SK-N-SH (cell line): ENCODE measurements at regions of chr15 and their contacts with region 1.

Region 1: DNA sequence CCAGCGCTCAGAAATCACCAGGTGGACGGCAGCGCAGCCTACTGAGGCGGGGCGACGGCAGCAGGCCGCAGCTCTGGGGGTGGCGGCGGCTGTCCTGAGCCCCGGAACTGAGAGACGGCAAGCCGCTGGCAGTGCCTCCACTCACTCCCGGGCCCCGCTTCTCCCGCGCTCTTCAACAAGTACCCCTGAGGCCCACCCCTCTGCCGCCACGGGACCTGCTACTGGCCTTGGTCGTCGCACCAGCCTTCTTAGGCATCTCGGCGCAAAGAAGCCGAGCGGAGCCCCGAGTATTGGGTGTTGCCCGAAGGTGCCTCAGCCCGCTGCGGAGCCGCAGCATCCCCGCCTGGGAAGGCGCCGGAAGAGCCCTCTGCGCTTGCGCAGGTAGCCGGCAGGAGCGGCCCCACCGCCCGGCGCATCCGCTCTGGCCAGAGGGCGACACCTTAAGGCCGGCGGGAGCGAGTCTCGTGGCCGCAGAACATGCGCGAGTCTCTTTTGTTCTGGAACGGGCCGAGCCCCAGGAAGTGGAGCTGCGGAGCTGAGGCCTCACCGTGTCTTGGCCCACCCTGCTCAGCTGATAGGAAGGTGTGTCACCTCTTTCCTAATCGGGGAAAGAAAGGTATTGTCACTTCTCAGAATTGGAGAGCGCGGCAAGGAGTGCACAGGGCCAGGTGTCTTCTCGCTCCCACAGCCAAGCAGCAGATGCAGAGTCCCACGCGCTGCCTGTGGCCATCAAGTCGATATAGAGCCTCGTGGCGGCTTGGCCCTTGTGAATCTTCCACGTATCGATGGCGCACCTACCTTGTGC is at the start of gene C15orf40:
- DNase-seq: peak; percentile 96
- H3K4me3 ChIP-seq: peak within 1 kb of the TSS; percentile 94 to 99
- H3K27ac ChIP-seq: peak within 1 kb of the TSS; percentile 75 to 85
- H3K4me1 ChIP-seq: peaks cover 12 to 27% of the 10 kb centered on the region in 2 experiments; a peak in 3 of 4 replicates
- H3K27me3 ChIP-seq: no peaks in the 10 kb centered on the region
- CTCF ChIP-seq: peak; percentile 69
- EP300 ChIP-seq: 0 out of 4 replicates have a peak, but pooled peaks of 1 of the 2 experiments have one; percentile 18
- RAD21 ChIP-seq: 0 out of 2 replicates have a peak, but pooled peaks have one; percentile 18
- polyA plus RNA-seq, gene C15orf40: 44.1 and 46.6 TPM in 2 replicates

Region 2: GRCh38 chr15:82585072-82585471 is 426.4 kb before region 1 on chr15:
- CTCF ChIA-PET with region 1: no interaction called
- POLR2A ChIA-PET with region 1: no interaction called
- DNase-seq: no peak
- H3K4me3 ChIP-seq: no peak overlapping the region
- H3K27ac ChIP-seq: no peak overlapping the region
- H3K4me1 ChIP-seq: no peaks in the 10 kb centered on the region
- H3K27me3 ChIP-seq: no peaks in the 10 kb centered on the region
- CTCF ChIP-seq: no peak; the same call in 1 of the 2 replicates
- EP300 ChIP-seq: no peak
- RAD21 ChIP-seq: peak; percentile 27; the same call in 1 of the 2 replicates

Region 3: DNA sequence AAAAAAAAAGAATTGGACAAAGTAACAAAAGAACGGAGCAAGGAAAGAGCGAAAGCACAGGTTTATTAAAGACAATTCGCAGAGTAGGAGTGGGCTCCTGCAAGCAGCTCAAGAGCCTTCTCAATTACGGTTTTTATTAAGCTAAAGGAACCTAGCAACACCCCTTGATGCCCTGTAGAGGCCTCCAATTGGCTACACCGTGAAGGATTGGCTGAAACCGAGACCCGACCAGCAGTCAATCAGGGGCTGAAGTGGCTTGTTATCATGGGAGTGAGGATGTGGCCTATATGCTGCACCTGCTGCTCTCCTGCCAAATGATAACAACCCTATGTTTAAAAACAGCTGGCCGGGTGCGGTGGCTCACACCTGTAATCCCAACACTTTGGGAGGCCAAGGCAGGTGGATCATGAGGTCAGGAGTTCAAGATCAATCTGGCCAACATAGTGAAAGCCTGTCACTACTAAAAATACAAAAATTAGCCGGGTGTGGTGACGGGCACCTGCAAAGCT is 281.4 kb before region 1 on chr15:
- CTCF ChIA-PET with region 1: no interaction called
- POLR2A ChIA-PET with region 1: no interaction called
- DNase-seq: no peak
- H3K4me3 ChIP-seq: no peak overlapping the region
- H3K27ac ChIP-seq: no peak overlapping the region
- H3K4me1 ChIP-seq: no peaks in the 10 kb centered on the region
- H3K27me3 ChIP-seq: no peaks in the 10 kb centered on the region
- CTCF ChIP-seq: no peak
- EP300 ChIP-seq: no peak
- RAD21 ChIP-seq: no peak

Region 4: DNA sequence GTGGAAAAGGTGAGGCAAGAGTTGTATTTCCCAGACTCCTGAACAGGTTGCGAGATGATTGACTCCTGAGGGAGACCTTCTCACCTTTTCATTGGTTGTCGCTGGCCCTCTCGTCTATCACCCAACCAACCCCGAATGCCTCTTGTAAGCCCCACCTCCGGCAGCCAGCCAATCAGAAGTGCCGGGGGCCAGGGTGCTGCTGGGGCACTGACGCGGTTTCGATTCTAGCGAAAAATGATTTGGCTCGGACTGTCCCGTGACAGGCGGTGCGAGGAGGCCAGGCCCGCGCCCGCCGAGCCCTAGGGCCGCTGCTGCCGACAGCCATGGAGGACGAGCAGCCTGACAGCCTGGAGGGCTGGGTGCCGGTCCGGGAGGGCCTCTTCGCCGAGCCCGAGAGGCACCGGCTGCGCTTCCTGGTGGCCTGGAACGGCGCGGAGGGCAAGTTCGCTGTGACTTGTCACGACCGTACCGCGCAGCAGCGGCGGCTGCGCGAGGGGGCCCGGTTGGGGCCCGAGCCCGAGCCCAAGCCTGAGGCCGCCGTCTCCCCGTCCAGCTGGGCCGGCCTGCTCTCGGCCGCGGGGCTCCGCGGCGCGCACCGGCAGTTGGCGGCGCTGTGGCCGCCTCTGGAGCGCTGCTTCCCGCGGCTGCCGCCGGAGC is 201.9 kb before region 1 on chr15 and contains the start of gene WHAMM:
- CTCF ChIA-PET with region 1: interaction called, 11 read pairs
- POLR2A ChIA-PET with region 1: no interaction called
- DNase-seq: peak; percentile 95
- H3K4me3 ChIP-seq: peak within 1 kb of the TSS; percentile 88 to 92
- H3K27ac ChIP-seq: peak within 1 kb of the TSS; percentile 87 to 90
- H3K4me1 ChIP-seq: peaks cover 7 to 9% of the 10 kb centered on the region in 2 experiments; a peak in 2 of 4 replicates
- H3K27me3 ChIP-seq: no peaks in the 10 kb centered on the region
- CTCF ChIP-seq: peak; percentile 28
- EP300 ChIP-seq: no peak
- RAD21 ChIP-seq: no peak
- polyA plus RNA-seq, gene WHAMM: 1.9 and 2.3 TPM in 2 replicates

Region 5: GRCh38 chr15:82985688-82986441 is 25.6 kb before region 1 on chr15 and contains the start of gene RAMAC:
- CTCF ChIA-PET with region 1: interaction called, 12 read pairs
- POLR2A ChIA-PET with region 1: interaction called, 3 read pairs
- DNase-seq: peak; percentile 87
- H3K4me3 ChIP-seq: peak within 1 kb of the TSS; percentile 88 to 92
- H3K27ac ChIP-seq: peak within 1 kb of the TSS; percentile 69 to 94
- H3K4me1 ChIP-seq: peaks cover 8 to 10% of the 10 kb centered on the region in 2 experiments; a peak in 3 of 4 replicates
- H3K27me3 ChIP-seq: no peaks in the 10 kb centered on the region
- CTCF ChIP-seq: no peak
- EP300 ChIP-seq: 0 out of 4 replicates have a peak, but pooled peaks of 1 of the 2 experiments have one; percentile 22
- RAD21 ChIP-seq: 0 out of 2 replicates have a peak, but pooled peaks have one; percentile 4
- polyA plus RNA-seq, gene RAMAC: 25.9 and 33.3 TPM in 2 replicates

Region 6: GRCh38 chr15:83030021-83030420 is 18.5 kb after region 1 on chr15:
- CTCF ChIA-PET with region 1: interaction called, 33 read pairs
- POLR2A ChIA-PET with region 1: no interaction called
- DNase-seq: no peak
- H3K4me3 ChIP-seq: no peak overlapping the region
- H3K27ac ChIP-seq: no peak overlapping the region
- H3K4me1 ChIP-seq: no peaks in the 10 kb centered on the region
- H3K27me3 ChIP-seq: no peaks in the 10 kb centered on the region
- CTCF ChIP-seq: no peak
- EP300 ChIP-seq: no peak
- RAD21 ChIP-seq: no peak

Region 7: DNA sequence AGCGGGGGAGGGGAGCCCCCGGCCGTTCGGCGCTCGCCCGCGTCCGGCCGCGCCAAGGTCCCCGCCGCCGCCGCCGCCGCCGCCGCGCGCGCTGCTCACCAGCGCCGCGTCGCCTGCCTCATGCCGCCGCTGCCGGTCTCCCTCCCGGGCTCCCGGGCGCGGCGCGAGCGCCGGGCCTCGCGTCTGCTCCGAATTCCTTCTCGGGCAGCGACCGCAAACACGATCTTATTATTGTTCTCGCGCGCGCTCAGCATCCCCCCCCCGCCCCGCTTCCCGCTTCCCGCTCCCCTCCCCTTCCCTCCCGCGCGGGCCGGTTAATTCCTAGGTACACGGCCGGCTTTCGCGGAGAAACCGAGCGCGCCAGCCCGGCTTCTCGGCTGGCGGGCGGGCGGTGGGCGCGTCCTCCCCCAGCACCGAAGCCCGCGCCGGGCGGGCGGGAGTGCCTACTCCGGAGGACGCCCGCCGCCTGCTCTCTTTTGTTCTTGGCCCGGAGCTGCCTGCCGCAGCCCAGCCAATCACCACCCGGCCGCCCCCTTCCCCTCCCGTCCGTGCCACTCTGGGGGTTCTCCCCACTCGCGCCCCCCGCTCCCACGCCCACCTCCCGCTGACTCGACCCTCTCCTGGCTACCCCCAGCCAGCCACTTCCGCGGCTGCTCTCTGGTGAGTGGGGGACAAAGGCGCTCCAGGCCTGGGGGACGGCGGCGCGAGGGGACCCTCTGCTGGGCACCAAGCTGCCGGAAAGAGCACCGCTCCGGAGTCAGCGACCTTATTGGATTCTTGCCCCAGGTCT is 196.3 kb after region 1 on chr15 and contains the start of gene HDGFL3:
- CTCF ChIA-PET with region 1: interaction called, 24 read pairs
- POLR2A ChIA-PET with region 1: interaction called, 3 read pairs
- DNase-seq: peak; percentile 87
- H3K4me3 ChIP-seq: peak within 1 kb of the TSS; percentile 71 to 86
- H3K27ac ChIP-seq: peak within 1 kb of the TSS; percentile 77 to 93
- H3K4me1 ChIP-seq: peaks cover 0 to 30% of the 10 kb centered on the region in 2 experiments; a peak in 2 of 4 replicates
- H3K27me3 ChIP-seq: no peaks in the 10 kb centered on the region
- CTCF ChIP-seq: peak; percentile 36
- EP300 ChIP-seq: no peak
- RAD21 ChIP-seq: peak; percentile 56
- polyA plus RNA-seq, gene HDGFL3: 8.0 and 9.2 TPM in 2 replicates